ENCODE measurements at regions of chr10 and their contacts with region 1.

Region 1: GRCh38 chr10:117174439-117175214 is 22.7 kb upstream of the KCNK18 start:
- DNase-seq: peak; percentile 67 to 88 (median 82)
- ATAC-seq: peak; percentile 88
- H3K4me3 ChIP-seq: peak overlapping the region; percentile 53 to 60
- H3K4me3 Mint-ChIP-seq: peak overlapping the region; percentile 92
- H3K27ac ChIP-seq: no peak overlapping the region
- H3K27ac Mint-ChIP-seq: no peak overlapping the region
- H3K4me1 ChIP-seq: peaks cover 6% of the 10 kb centered on the region
- H3K4me1 Mint-ChIP-seq: peaks cover 18% of the 10 kb centered on the region
- H3K27me3 ChIP-seq: peaks cover 0 to 7% of the 10 kb centered on the region in 2 experiments
- H3K27me3 Mint-ChIP-seq: peaks cover 29% of the 10 kb centered on the region
- CTCF ChIP-seq: peak; percentile 72

Region 2: DNA sequence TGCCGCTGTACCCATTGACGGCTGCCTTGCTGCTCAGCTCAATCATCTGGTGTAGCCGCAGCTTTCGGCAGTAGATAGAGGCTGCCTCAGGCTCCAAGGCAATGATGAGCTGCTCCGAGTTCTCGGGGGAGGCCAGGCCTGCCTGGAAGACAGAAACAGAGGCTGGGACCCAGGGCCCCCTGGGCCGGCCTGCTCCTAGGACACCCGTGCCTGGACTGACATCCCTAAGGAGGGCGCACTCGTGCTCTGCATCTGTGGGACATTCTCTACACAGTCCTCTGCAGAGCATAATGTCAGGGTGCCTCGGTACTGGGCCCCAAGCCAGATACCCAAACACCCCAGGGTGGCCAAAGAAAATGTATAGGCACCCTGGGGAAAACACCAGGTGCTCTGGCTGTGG is 490.8 kb before region 1 on chr10:
- CTCF ChIA-PET with region 1: interaction called, 18 read pairs
- POLR2A ChIA-PET with region 1: no interaction called
- intact Hi-C with region 1: no loop called
- DNase-seq: no peak
- ATAC-seq: no peak
- H3K4me3 ChIP-seq: no peak overlapping the region
- H3K4me3 Mint-ChIP-seq: no peak overlapping the region
- H3K27ac ChIP-seq: no peak overlapping the region
- H3K27ac Mint-ChIP-seq: no peak overlapping the region
- H3K4me1 ChIP-seq: no peaks in the 10 kb centered on the region
- H3K4me1 Mint-ChIP-seq: no peaks in the 10 kb centered on the region
- H3K27me3 ChIP-seq: no peaks in the 10 kb centered on the region
- H3K27me3 Mint-ChIP-seq: peaks cover 28% of the 10 kb centered on the region
- CTCF ChIP-seq: no peak

Region 3: GRCh38 chr10:116796910-116797513 is 377.6 kb before region 1 on chr10:
- CTCF ChIA-PET with region 1: interaction called, 68 read pairs
- POLR2A ChIA-PET with region 1: no interaction called
- intact Hi-C with region 1: loop called (anchors 1 kb)
- DNase-seq: peak; percentile 36 to 72 (median 64)
- ATAC-seq: no peak
- H3K4me3 ChIP-seq: no peak overlapping the region
- H3K4me3 Mint-ChIP-seq: no peak overlapping the region
- H3K27ac ChIP-seq: no peak overlapping the region
- H3K27ac Mint-ChIP-seq: no peak overlapping the region
- H3K4me1 ChIP-seq: no peaks in the 10 kb centered on the region
- H3K4me1 Mint-ChIP-seq: no peaks in the 10 kb centered on the region
- H3K27me3 ChIP-seq: no peaks in the 10 kb centered on the region
- H3K27me3 Mint-ChIP-seq: peaks cover 27% of the 10 kb centered on the region
- CTCF ChIP-seq: peak; percentile 74

Region 4: DNA sequence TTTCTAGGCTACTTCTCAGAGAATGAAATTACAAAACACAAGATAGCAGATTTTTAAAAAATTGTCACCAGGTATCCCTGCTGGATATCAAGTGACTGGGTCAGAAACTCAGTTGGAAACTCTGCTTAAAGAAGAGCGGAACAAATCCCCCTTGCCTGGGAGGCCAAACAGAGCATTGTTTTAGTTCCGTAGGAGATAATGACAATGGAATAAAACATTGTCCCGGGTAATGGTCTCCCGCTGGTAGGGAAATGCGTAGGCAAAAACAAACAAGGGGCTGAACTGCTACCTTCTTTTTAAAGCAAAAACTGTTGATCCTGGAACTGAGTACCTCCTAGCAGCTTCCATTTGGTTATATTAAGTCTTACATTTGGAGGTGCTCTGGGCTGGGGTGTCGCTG is 15.2 kb before region 1 on chr10:
- CTCF ChIA-PET with region 1: interaction called, 34 read pairs
- POLR2A ChIA-PET with region 1: no interaction called
- intact Hi-C with region 1: no loop called
- DNase-seq: no peak
- ATAC-seq: no peak
- H3K4me3 ChIP-seq: no peak overlapping the region
- H3K4me3 Mint-ChIP-seq: no peak overlapping the region
- H3K27ac ChIP-seq: no peak overlapping the region
- H3K27ac Mint-ChIP-seq: no peak overlapping the region
- H3K4me1 ChIP-seq: peaks cover 20% of the 10 kb centered on the region
- H3K4me1 Mint-ChIP-seq: peaks cover 16% of the 10 kb centered on the region
- H3K27me3 ChIP-seq: peaks cover 32 to 34% of the 10 kb centered on the region in 2 experiments
- H3K27me3 Mint-ChIP-seq: peaks cover 71% of the 10 kb centered on the region
- CTCF ChIP-seq: no peak

Region 5: DNA sequence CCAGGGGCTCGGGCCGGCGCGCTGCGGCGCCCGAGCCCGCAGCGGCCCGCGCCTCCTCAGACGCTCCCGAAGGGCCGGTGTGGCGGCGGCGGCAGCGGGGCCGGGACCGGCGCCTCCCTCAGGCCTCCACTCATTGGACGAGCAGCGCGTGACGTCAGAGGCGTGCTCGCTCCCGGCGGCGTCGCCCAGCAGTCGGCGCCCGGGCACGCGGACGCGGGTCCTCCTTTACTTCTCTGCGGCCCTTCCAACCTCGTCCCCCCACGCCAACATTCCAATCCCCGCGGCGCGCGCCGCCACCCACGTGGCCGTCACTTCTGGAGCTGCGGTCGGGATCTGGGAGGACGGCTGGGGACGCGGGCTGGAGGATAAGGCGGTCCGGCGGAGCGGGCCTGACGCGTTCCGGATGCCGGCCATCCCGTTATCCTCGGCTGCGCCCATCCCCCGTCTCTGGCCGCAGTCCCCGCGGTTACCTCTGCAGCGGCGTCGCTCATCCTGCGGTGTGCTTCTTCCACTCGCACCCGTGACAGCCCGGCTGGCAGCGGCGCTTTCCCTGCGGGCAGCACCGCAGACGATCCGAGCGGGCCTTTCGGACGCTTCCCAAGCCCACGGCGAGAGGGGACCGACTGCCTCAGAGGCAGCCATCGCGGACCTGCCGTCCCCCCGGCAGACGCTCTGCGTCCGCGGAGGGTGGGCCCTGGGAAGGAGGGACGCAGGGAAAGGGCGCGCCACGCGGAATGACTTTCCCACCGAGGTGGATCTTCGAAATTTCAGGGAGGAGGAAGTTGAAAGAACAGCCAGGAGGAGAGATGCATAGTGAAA is 200.9 kb after region 1 on chr10 and contains the start of gene PDZD8:
- CTCF ChIA-PET with region 1: no interaction called
- POLR2A ChIA-PET with region 1: no interaction called
- intact Hi-C with region 1: loop called (anchors 5 kb)
- DNase-seq: peak; percentile 77 to 96 (median 92)
- ATAC-seq: peak; percentile 76
- H3K4me3 ChIP-seq: peak within 1 kb of the TSS; percentile 87 to 95
- H3K4me3 Mint-ChIP-seq: peak within 1 kb of the TSS; percentile 95
- H3K27ac ChIP-seq: peak within 1 kb of the TSS; percentile 73 to 83
- H3K27ac Mint-ChIP-seq: peak within 1 kb of the TSS; percentile 95
- H3K4me1 ChIP-seq: peaks cover 26% of the 10 kb centered on the region
- H3K4me1 Mint-ChIP-seq: peaks cover 37% of the 10 kb centered on the region
- H3K27me3 ChIP-seq: peaks cover 0 to 5% of the 10 kb centered on the region in 2 experiments
- H3K27me3 Mint-ChIP-seq: peaks cover 25% of the 10 kb centered on the region
- CTCF ChIP-seq: no peak
- total RNA-seq, gene PDZD8: 49.6 to 59.8 TPM

Measured in CD8-positive, alpha-beta T cell (primary cell).